ENCODE measurements at regions of chr1 and their contacts with region 1.

Region 1: DNA sequence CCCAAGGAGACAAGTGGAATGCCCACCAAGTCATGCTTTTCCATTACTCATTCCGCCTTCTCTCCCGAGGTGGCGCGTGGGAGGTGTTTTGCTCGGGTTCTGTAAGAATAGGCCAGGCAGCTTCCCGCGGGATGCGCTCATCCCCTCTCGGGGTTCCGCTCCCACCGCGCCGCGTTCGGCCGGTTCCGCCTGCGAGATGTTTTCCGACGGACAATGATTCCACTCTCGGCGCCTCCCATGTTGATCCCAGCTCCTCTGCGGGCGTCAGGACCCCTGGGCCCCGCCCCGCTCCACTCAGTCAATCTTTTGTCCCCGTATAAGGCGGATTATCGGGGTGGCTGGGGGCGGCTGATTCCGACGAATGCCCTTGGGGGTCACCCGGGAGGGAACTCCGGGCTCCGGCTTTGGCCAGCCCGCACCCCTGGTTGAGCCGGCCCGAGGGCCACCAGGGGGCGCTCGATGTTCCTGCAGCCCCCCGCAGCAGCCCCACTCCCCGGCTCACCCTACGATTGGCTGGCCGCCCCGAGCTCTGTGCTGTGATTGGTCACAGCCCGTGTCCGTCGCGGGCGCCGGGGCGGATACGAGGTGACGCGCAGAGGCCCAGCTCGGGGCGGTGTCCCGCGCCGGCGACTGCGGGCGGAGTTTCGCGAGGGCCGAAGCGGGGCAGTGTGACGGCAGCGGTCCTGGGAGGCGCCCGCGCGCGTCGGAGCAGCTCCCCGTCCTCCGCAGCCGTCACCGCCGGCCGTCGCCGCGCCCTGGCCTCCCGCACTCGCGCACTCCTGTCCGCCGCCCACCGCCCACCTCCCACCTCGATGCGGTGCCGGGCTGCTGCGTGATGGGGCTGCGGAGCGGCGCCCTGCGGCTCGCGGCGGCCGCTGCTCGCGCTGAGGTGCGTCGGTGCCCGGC is at the start of gene KIF1B:
- DNase-seq: peak; percentile 98
- H3K4me3 ChIP-seq: peak within 1 kb of the TSS; percentile 87 to 97 (median 93)
- H3K27ac ChIP-seq: peak within 1 kb of the TSS; percentile 87
- H3K4me1 ChIP-seq: peaks cover 16% of the 10 kb centered on the region
- H3K27me3 ChIP-seq: no peaks in the 10 kb centered on the region
- CTCF ChIP-seq: peak; percentile 56 to 98
- total RNA-seq, gene KIF1B: 24.7 to 36.2 TPM

Region 2: GRCh38 chr1:10101929-10102328 is 108.2 kb before region 1 on chr1:
- CTCF ChIA-PET with region 1: no interaction called
- dilution Hi-C with region 1: no loop called
- in situ Hi-C with region 1: no loop called
- intact Hi-C with region 1: no loop called
- DNase-seq: no peak
- H3K4me3 ChIP-seq: no peak overlapping the region
- H3K27ac ChIP-seq: no peak overlapping the region
- H3K4me1 ChIP-seq: peaks cover 7% of the 10 kb centered on the region
- H3K27me3 ChIP-seq: no peaks in the 10 kb centered on the region
- CTCF ChIP-seq: no peak

Region 3: DNA sequence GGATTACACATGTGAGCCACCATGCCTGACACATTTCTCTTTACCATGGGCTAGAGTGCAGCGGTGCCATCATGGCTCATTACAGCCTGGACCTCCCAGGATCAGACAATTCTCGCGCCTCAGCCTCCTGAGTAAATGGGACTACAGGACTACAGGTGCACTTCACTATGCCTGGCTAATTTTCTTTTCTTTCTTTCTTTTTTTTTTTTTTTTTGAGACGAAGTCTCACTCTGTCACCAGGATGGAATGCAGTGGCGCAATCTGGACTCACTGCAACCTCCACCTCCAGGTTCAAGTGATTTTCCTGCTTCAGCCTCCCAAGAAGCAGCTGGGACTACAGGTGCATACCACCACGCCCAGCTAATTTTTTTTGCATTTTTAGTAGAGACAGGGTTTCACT is 14.6 kb before region 1 on chr1:
- CTCF ChIA-PET with region 1: no interaction called
- dilution Hi-C with region 1: no loop called
- in situ Hi-C with region 1: no loop called
- intact Hi-C with region 1: loop called (anchors 2 kb)
- DNase-seq: peak; percentile 70
- H3K4me3 ChIP-seq: no peak overlapping the region
- H3K27ac ChIP-seq: no peak overlapping the region
- H3K4me1 ChIP-seq: no peaks in the 10 kb centered on the region
- H3K27me3 ChIP-seq: peaks cover 2% of the 10 kb centered on the region
- CTCF ChIP-seq: no peak

Region 4: GRCh38 chr1:10253755-10254154 is 43.6 kb after region 1 on chr1:
- CTCF ChIA-PET with region 1: no interaction called
- dilution Hi-C with region 1: loop called (anchors 5 kb)
- in situ Hi-C with region 1: no loop called
- intact Hi-C with region 1: no loop called
- DNase-seq: peak; percentile 61
- H3K4me3 ChIP-seq: no peak overlapping the region
- H3K27ac ChIP-seq: no peak overlapping the region
- H3K4me1 ChIP-seq: peaks cover 7% of the 10 kb centered on the region
- H3K27me3 ChIP-seq: no peaks in the 10 kb centered on the region
- CTCF ChIP-seq: no peak

Region 5: DNA sequence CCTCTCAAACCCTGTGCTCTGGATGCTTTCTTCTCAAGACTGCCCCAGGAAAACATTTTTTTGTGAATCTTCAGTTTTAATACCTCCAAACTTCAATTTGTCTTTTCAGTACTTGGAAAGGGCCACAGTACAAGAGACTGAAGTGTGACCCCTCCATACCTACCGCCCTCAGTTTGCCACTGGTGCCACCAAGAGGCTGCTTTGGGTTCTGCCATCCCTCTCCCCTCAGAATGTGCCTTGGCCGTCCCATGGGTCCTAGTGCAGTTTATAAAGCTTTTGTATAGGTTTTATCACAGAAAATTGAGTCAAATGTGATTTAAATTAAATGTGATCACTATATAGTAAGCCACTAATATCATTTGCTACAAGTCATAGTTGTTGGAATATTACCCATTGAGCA is 127.9 kb after region 1 on chr1:
- CTCF ChIA-PET with region 1: no interaction called
- dilution Hi-C with region 1: no loop called
- in situ Hi-C with region 1: no loop called
- intact Hi-C with region 1: loop called (anchors 1 kb)
- DNase-seq: no peak
- H3K4me3 ChIP-seq: no peak overlapping the region
- H3K27ac ChIP-seq: no peak overlapping the region
- H3K4me1 ChIP-seq: no peaks in the 10 kb centered on the region
- H3K27me3 ChIP-seq: no peaks in the 10 kb centered on the region
- CTCF ChIP-seq: peak; percentile 66 to 68

Measured in mammary epithelial cell (primary cell).